Caco-2 (cell line): ENCODE measurements at regions of chr3 and their contacts with region 1.

Region 1: GRCh38 chr3:187164885-187165543 is 25.7 kb upstream of the RPL39L start:
- DNase-seq: peak in 1 of 2 experiments; percentile 62
- H3K4me3 ChIP-seq: no peak overlapping the region
- H3K4me3 Mint-ChIP-seq: no peak overlapping the region
- H3K27ac Mint-ChIP-seq: no peak overlapping the region
- H3K4me1 ChIP-seq: no peaks in the 10 kb centered on the region
- H3K4me1 Mint-ChIP-seq: no peaks in the 10 kb centered on the region
- H3K27me3 ChIP-seq: no peaks in the 10 kb centered on the region
- H3K27me3 Mint-ChIP-seq: peaks cover 5% of the 10 kb centered on the region
- CTCF ChIP-seq: peak; percentile 57 to 69

Region 2: DNA sequence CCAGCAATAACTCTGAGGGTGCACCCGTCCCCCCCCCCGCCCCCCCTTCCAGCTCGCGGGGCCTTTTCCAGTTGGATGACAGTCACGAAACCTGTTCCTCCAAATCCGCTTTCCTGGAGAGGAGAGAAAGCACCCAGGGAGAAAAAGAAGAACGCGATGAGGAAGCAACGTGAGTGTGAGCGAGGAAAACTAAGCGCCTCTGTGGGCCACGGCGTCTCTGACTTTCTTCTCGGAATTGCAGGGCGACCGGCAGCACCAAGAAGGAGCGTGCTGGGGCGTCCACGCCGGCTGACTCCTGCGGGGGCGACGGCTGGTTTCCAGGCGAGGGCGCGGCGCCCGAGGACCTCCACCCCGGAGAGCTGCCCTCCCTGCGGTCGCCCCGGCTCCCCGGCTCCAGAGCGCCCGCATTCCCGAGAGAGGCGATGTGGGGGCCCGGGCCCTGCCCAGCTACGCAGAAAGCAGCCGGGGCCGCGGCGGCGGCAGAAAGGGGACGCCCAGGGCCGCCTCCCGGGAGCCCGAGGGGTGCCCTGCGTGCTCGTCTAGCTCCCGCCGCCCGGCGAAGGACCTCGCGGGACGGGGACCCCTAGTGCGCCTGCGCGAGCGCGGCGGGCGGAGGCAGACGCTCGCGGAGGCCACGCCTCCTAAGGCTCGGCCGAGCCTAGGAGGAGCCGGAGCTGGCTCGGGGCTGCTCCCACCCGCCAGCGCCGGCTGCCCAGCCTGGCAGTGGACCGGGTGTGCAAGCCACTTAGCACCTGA is 337.9 kb before region 1 on chr3:
- CTCF ChIA-PET with region 1: interaction called, 10 read pairs
- POLR2A ChIA-PET with region 1: no interaction called
- intact Hi-C with region 1: no loop called
- DNase-seq: peak; percentile 71 to 90
- H3K4me3 ChIP-seq: peak overlapping the region; percentile 76
- H3K4me3 Mint-ChIP-seq: peak overlapping the region; percentile 70
- H3K27ac Mint-ChIP-seq: no peak overlapping the region
- H3K4me1 ChIP-seq: 0 out of 2 replicates have a peak, but pooled peaks cover 2% of the 10 kb centered on the region
- H3K4me1 Mint-ChIP-seq: peaks cover 7% of the 10 kb centered on the region
- H3K27me3 ChIP-seq: peaks cover 1% of the 10 kb centered on the region; the same call in 1 of the 2 replicates
- H3K27me3 Mint-ChIP-seq: peaks cover 12% of the 10 kb centered on the region
- CTCF ChIP-seq: no peak

Region 3: GRCh38 chr3:186985661-186986364 is 179.2 kb before region 1 on chr3:
- CTCF ChIA-PET with region 1: interaction called, 5 read pairs
- POLR2A ChIA-PET with region 1: no interaction called
- intact Hi-C with region 1: loop called (anchors 10 kb)
- DNase-seq: no peak
- H3K4me3 ChIP-seq: no peak overlapping the region
- H3K4me3 Mint-ChIP-seq: no peak overlapping the region
- H3K27ac Mint-ChIP-seq: no peak overlapping the region
- H3K4me1 ChIP-seq: peaks cover 16% of the 10 kb centered on the region
- H3K4me1 Mint-ChIP-seq: peaks cover 26% of the 10 kb centered on the region
- H3K27me3 ChIP-seq: no peaks in the 10 kb centered on the region
- H3K27me3 Mint-ChIP-seq: no peaks in the 10 kb centered on the region
- CTCF ChIP-seq: no peak

Region 4: DNA sequence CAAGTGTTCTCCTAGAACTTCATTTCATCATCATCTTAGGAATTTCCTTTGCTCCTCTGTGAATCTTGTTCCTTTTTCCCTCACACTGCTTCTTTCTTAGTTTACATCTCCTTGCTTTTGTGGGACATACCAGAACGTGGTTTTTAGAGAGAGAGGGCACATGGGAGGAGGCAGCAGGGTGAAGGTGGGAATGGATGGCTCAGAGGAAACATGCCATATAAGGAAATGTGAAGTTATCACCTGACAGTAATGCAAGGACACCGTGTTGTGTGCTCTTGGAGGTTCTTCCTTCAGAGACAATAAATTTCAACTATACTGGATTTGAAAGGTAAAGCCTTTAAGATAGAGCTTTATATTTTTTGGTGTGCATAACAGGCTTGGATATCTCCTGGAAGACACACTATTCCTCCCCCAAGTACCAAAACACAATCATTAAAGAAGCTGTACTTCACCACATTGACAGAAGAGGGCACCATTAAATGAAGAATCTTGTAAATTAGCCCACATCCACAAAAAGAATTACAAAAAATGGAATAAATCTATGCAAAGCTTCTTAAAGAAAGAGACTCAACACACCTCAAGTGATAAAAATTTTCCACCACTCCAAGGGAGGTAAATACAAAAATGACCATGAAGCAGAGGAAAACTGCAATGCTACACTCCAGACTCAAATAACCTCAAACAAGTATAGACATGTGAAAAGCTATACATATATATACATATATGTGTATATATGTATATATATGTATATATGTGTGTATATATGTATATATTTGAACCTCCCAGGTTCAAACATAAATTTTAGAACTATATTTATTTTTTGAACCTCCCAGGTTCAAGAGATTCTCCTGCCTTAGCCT is 51.9 kb before region 1 on chr3:
- CTCF ChIA-PET with region 1: interaction called, 26 read pairs
- POLR2A ChIA-PET with region 1: no interaction called
- intact Hi-C with region 1: loop called (anchors 1 kb)
- DNase-seq: no peak
- H3K4me3 ChIP-seq: no peak overlapping the region
- H3K4me3 Mint-ChIP-seq: no peak overlapping the region
- H3K27ac Mint-ChIP-seq: no peak overlapping the region
- H3K4me1 ChIP-seq: no peaks in the 10 kb centered on the region
- H3K4me1 Mint-ChIP-seq: peaks cover 7% of the 10 kb centered on the region
- H3K27me3 ChIP-seq: no peaks in the 10 kb centered on the region
- H3K27me3 Mint-ChIP-seq: peaks cover 2% of the 10 kb centered on the region
- CTCF ChIP-seq: peak; percentile 41 to 63

Region 5: DNA sequence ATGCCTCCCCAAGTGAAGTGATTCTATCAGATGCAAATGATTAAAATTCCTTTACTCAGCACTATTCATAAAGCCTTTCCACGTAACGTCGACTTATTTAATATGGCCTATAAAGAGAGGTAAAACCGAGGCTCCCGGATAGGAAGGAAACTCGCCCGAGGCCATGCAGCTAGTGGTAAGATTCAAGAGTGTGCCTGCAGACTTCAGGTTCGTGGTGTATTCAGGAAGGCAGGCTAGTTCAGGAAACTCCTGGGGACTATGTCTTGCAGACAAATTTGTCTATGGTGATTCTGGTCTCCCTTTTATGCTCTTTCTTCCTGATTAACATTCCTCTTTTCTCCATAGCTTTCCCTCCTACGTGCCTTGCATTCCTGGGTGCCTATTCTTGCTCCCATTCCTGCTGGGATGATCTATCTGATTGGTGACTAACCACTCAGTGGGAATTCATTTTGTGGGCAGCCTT is 354.4 kb after region 1 on chr3:
- CTCF ChIA-PET with region 1: no interaction called
- POLR2A ChIA-PET with region 1: no interaction called
- intact Hi-C with region 1: no loop called
- DNase-seq: no peak
- H3K4me3 ChIP-seq: no peak overlapping the region
- H3K4me3 Mint-ChIP-seq: no peak overlapping the region
- H3K27ac Mint-ChIP-seq: no peak overlapping the region
- H3K4me1 ChIP-seq: no peaks in the 10 kb centered on the region
- H3K4me1 Mint-ChIP-seq: no peaks in the 10 kb centered on the region
- H3K27me3 ChIP-seq: no peaks in the 10 kb centered on the region
- H3K27me3 Mint-ChIP-seq: no peaks in the 10 kb centered on the region
- CTCF ChIP-seq: no peak